Endothelial cell of umbilical vein (primary cell): ENCODE measurements at regions of chr19 and their contacts with region 1.

Region 1: DNA sequence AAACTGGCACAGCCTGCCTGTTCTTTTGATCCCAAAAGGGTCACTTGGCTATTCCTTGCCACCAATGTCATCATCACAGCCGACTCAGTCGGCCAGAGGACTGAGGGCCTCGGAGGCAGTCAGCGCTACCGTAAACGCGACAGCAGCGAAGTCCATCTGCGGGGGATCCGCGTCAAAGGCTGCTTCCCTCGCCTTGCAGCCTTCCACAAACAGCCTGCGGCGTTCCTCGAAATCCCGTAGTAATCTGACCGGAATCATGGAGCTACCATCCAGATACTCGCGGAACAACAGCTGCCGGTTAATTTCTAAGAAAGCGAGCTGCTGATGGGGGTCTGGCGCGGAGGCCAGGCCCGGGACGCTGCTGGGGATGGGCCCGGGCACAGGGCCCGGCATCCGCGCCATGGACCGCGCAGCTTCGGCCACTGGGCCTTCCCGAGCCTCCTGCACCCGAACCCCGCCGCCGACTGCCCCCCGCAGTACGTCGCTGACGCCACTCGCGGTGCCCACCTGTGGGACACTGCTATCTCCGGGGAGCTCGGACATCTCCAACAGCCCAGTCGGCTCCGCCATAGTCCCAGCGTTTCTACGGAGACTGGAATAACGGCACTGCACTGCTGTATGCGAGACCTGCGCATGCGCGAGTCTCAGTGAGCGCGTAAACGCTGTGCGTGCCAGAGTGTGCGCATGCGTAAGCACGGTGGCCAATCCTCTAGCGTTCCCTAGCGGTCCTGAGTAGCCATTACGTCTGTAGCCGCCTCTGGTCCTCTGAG is at the start of gene EID2B:
- DNase-seq: peak; percentile 97
- H3K4me3 ChIP-seq: peak within 1 kb of the TSS; percentile 68 to 93 (median 87)
- H3K27ac ChIP-seq: peak within 1 kb of the TSS; percentile 29
- H3K4me1 ChIP-seq: peaks cover 6% of the 10 kb centered on the region
- H3K27me3 ChIP-seq: no peaks in the 10 kb centered on the region
- CTCF ChIP-seq: peak; percentile 96
- POLR2A ChIP-seq: peak; percentile 90
- total RNA-seq, gene EID2B: 3.0 and 3.9 TPM in 2 replicates

Region 2: DNA sequence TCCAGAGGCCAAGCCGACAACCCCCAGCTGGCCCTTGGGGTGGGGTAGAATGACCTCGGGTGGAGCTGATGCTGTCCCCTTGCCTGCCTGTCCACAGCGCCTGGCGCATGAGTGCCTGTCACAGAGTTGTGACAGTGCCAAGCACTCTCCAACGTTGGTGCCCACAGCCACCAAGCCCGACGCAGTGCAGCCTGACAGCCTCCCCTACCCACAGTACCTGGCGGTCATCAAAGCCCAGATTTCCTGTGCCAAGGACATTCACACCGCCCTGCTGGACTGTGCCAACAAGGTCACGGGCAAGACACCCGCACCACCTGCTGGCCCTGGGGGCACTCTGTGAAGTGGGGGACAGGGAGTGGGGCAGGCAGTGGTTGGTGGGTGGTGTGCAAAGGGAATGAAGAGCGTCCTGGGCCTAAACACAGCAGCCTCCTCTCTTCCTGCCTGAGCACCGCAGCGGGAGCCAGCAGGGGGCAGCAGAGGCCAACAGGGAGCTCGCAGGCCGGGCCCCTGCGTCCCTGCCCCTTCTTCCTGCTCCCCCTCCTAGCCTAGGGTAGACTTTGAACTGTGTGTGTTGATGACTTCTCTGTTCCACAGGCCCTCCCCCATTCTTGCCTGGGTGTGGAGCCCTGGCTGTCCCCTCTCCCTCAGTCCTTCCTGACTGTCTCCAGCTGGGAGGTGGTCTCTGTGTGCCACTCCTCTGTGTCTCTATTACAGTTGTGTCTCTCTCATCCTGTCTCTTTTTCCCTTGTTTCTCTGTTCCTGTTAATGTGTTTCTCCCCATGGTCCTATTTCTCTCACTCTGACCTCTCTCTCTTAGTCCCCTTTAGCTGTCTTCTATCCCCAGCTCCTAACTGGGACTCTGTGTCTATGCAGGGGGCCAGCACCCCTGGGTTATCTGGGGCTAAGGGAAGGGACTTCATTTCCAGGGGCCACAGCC is 134.8 kb before region 1 on chr19:
- CTCF ChIA-PET with region 1: interaction called, 5 read pairs
- POLR2A ChIA-PET with region 1: no interaction called
- dilution Hi-C with region 1: no loop called
- intact Hi-C with region 1: loop called (anchors 1 kb)
- DNase-seq: peak; percentile 79
- H3K4me3 ChIP-seq: no peak overlapping the region
- H3K27ac ChIP-seq: peak overlapping the region; percentile 30
- H3K4me1 ChIP-seq: peaks cover 8% of the 10 kb centered on the region
- H3K27me3 ChIP-seq: no peaks in the 10 kb centered on the region
- CTCF ChIP-seq: peak; percentile 96 to 99
- POLR2A ChIP-seq: no peak

Region 3: DNA sequence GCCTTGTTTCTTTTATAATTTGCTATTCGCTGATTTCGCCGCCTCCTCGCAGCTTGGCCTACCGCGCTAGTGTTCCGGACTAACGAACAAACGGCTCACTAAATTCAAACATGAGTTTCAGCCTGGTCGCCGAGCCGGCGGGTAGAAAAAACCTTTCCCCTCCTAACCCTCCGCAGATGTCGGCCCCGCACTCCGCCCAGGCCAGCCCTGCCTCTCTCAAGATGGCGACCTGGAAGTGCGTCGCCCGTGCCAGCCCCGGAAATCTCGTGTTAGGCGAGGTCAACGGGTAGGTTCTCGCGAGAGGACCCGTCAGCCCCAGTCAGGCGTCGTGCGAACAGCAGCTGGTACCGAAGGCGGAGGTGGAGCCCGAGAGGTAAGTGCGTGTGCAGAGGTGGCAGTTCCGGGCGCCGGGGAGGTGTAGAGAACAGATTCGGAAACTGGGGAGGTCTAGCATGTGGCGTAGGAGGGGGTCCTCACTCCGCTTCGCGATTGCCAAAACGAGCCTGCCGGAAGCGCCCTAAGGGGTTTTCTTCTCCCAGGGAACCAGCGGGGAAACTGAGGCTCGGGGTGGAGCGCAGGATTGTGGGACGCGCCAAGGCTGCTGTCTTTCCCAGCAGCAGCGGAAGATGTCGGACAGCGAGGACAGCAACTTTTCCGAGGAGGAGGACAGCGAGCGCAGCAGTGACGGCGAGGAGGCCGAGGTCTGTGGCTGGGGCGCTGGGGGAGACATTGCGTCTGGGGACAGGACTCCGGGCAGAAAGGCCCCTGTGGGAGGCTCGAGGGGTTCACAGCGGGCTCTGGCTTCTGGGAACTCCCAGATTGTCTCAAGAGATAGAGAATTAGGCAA is 86.9 kb before region 1 on chr19 and contains the start of gene SUPT5H:
- CTCF ChIA-PET with region 1: interaction called, 13 read pairs
- POLR2A ChIA-PET with region 1: no interaction called
- dilution Hi-C with region 1: no loop called
- intact Hi-C with region 1: loop called (anchors 10 kb)
- DNase-seq: peak; percentile 98
- H3K4me3 ChIP-seq: peak within 1 kb of the TSS; percentile 85 to 98 (median 94)
- H3K27ac ChIP-seq: peak within 1 kb of the TSS; percentile 94
- H3K4me1 ChIP-seq: peaks cover 20% of the 10 kb centered on the region
- H3K27me3 ChIP-seq: no peaks in the 10 kb centered on the region
- CTCF ChIP-seq: no peak
- POLR2A ChIP-seq: peak; percentile 81
- total RNA-seq, gene SUPT5H: 108 and 120 TPM in 2 replicates

Region 4: DNA sequence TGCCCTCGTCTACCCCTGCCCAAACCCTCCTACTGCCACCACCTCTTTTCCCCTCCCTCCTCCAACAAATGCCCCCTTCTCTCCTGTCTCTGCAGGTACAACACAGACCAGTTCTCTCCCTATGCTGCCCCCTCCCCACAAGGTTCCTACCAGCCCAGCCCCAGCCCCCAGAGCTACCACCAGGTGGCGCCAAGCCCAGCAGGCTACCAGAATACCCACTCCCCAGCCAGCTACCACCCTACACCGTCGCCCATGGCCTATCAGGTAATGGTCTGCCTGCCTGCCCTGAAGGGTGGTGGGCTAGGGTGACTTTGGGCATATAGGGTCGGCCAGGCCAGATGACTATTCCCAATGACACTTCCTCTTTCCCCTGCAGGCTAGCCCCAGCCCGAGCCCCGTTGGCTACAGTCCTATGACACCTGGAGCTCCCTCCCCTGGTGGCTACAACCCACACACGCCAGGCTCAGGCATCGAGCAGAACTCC is 58.2 kb before region 1 on chr19:
- CTCF ChIA-PET with region 1: interaction called, 80 read pairs
- POLR2A ChIA-PET with region 1: no interaction called
- dilution Hi-C with region 1: no loop called
- intact Hi-C with region 1: loop called (anchors 1 kb)
- DNase-seq: peak; percentile 37
- H3K4me3 ChIP-seq: no peak overlapping the region
- H3K27ac ChIP-seq: no peak overlapping the region
- H3K4me1 ChIP-seq: no peaks in the 10 kb centered on the region
- H3K27me3 ChIP-seq: no peaks in the 10 kb centered on the region
- CTCF ChIP-seq: peak; percentile 81 to 95
- POLR2A ChIP-seq: no peak

Region 5: DNA sequence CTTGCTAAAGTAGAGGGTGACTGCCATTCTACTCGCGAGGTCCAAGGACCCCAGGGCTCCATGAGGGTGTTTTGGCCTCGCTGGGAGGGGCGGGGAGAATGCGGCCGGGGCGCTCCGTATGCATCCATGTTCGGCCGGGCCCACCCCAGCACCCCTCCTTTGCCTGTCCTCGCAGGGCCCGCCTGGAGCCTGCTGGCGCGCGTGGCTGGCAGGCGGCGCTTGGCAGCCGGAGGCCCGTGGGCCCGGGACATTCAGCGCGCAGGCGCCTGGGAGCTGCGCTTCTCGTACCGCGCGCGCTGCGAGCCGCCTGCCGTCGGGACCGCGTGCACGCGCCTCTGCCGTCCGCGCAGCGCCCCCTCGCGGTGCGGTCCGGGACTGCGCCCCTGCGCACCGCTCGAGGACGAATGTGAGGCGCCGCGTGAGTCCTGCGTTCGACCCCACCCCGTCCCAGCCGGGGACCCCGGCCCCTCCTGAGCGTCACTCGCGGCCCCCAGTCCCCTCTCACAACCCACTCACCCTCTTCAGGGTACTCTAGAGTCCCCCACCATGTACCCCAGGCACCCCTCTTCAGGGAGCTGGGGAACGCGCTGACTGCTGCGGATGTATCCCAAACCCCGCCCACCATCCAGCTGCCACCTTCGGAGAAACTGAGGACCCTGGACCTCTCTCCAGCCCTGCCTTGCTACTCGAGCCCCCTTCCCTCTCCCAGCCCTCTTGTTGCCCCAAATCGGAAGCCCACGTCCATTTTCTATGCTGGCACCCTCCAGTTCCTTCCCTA is 29.6 kb before region 1 on chr19:
- CTCF ChIA-PET with region 1: interaction called, 14 read pairs
- POLR2A ChIA-PET with region 1: no interaction called
- dilution Hi-C with region 1: no loop called
- intact Hi-C with region 1: loop called (anchors 1 kb)
- DNase-seq: peak; percentile 67
- H3K4me3 ChIP-seq: no peak overlapping the region
- H3K27ac ChIP-seq: no peak overlapping the region
- H3K4me1 ChIP-seq: peaks cover 10% of the 10 kb centered on the region
- H3K27me3 ChIP-seq: peaks cover 31 to 32% of the 10 kb centered on the region in 2 experiments
- CTCF ChIP-seq: peak; percentile 82
- POLR2A ChIP-seq: no peak

Region 6: DNA sequence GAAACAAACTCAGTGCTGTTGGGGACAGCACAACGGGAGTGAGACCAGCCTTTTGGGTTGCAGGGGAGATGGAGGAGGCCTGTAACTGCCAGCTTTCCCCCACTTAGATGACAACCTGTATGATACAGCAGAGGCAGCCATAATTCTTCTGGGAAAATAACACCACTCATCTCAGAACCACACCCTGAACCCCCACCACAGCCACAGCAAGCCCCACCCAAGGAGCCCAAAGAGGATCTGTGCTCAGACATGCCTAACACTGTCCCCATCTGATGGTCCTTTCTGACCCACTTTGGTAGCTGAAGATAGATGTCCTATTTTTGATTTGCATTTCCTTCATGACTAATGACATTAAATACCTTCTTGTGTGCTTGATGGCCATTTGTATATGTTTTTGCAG is 85.3 kb after region 1 on chr19:
- CTCF ChIA-PET with region 1: no interaction called
- POLR2A ChIA-PET with region 1: no interaction called
- dilution Hi-C with region 1: no loop called
- intact Hi-C with region 1: no loop called
- DNase-seq: no peak
- H3K4me3 ChIP-seq: no peak overlapping the region
- H3K27ac ChIP-seq: no peak overlapping the region
- H3K4me1 ChIP-seq: no peaks in the 10 kb centered on the region
- H3K27me3 ChIP-seq: no peaks in the 10 kb centered on the region
- CTCF ChIP-seq: no peak
- POLR2A ChIP-seq: no peak